HEK293 (cell line): ENCODE measurements at regions of chr12 and their contacts with region 1.

Region 1: GRCh38 chr12:118183705-118184104 is 47.8 kb downstream of the PEBP1 start:
- H3K4me3 ChIP-seq: no peak overlapping the region
- H3K27ac ChIP-seq: no peak overlapping the region
- H3K4me1 ChIP-seq: no peaks in the 10 kb centered on the region
- CTCF ChIP-seq: no peak

Region 2: DNA sequence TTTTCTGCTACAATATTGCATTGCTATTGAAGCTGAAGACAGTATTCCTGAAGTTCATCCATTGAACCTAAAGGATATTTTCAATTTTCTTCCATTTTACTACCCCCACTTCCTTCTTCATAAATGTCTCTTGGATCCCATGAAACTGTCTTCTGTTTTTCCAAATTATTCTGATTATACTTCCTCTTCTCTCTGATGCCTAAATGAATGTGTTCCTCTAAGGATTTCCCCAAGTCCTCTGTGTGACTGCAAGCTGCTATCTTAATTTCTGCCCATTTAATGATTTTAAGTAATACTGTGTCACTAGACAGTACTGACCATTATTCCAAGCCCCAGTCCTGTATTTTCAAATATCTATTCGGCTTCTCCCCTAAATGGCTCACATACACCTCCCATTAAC is 86.1 kb after region 1 on chr12:
- CTCF ChIA-PET with region 1: no interaction called
- POLR2A ChIA-PET with region 1: interaction called, 10 read pairs
- H3K4me3 ChIP-seq: no peak overlapping the region
- H3K27ac ChIP-seq: no peak overlapping the region
- H3K4me1 ChIP-seq: no peaks in the 10 kb centered on the region
- CTCF ChIP-seq: no peak

Region 3: DNA sequence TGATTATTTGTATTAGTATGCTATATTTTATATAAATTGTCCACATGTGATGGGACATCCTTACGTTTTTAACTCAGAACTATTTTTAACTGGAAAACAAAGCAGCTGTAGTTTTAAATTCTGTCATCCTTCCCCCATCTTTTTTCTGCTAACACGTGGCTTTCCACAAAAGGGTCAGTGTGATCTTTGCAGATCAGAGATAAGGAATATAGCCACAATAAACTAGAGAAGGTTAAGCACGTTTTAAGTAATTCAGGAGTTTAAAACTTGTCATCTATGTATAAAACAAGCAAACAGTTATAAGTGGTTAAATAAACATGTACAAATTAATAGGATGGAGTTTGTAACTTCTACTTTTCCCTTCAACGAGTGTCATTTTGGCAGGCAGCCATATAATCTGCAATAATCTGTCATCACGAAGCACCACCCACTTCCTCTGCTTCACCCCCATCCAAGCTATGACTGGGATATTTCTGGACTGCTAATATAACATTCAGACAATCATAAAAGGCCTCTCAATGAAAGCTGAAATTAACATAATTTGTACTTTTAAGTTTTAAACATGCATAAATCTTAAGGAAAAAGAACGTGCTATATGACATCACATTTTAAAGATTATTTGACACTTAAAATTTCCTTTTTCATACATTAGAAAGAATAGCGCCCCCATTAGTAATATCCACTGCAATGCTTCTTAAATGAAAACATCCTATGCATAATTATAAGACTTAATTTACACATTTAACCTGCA is 173.7 kb after region 1 on chr12:
- CTCF ChIA-PET with region 1: interaction called, 10 read pairs
- POLR2A ChIA-PET with region 1: no interaction called
- H3K4me3 ChIP-seq: no peak overlapping the region
- H3K27ac ChIP-seq: no peak overlapping the region
- H3K4me1 ChIP-seq: peaks cover 6% of the 10 kb centered on the region; the same call in 1 of the 2 replicates
- CTCF ChIP-seq: no peak